ENCODE measurements at regions of chr9 and their contacts with region 1.

Region 1: GRCh38 chr9:2809691-2810433 is 34.0 kb downstream of the PUM3 start:
- DNase-seq: no peak
- ATAC-seq: peak; percentile 88

Region 2: DNA sequence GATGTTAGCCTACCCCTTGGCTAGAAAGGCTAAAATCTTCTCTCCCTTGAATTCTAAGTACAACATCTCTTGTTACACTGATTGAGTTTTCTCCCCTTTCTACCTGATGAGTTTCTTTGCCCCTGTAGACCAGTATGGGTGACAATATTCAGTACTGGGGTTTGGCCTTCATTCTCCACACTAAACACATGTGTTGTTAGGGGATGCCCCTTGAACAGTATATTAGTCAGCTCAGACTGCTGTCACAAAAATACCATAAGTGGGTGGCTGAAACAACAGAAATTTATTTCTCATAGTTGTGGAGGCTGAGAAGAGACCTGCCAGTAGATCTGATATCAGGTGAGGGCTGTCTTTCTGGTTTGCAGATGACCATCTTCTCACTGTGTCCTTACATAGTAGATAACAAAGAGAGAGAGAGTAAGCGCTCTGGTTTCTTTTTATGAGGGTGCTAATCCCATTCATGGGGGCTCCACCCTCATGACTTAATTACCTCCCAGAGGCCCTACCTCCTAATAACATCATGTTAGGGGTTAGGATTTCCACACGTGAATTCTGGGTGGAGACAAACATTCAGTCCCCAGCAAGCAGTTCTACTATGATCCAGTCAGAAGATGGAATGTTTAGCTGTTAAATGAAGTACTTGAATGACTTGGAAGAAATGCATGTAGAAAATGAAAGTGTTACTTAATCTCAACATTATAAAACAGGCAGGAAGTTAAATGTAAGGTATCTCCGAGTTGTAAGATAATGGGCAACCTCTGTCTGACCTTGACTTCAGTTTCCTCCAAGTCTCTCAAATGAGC is 170.8 kb before region 1 on chr9:
- intact Hi-C with region 1: loop called (anchors 10 kb)
- DNase-seq: no peak
- ATAC-seq: no peak

Region 3: GRCh38 chr9:2662496-2662895 is 147.4 kb before region 1 on chr9:
- intact Hi-C with region 1: loop called (anchors 10 kb)
- DNase-seq: no peak
- ATAC-seq: no peak